ENCODE measurements at regions of chr4 and their contacts with region 1.

Region 1: DNA sequence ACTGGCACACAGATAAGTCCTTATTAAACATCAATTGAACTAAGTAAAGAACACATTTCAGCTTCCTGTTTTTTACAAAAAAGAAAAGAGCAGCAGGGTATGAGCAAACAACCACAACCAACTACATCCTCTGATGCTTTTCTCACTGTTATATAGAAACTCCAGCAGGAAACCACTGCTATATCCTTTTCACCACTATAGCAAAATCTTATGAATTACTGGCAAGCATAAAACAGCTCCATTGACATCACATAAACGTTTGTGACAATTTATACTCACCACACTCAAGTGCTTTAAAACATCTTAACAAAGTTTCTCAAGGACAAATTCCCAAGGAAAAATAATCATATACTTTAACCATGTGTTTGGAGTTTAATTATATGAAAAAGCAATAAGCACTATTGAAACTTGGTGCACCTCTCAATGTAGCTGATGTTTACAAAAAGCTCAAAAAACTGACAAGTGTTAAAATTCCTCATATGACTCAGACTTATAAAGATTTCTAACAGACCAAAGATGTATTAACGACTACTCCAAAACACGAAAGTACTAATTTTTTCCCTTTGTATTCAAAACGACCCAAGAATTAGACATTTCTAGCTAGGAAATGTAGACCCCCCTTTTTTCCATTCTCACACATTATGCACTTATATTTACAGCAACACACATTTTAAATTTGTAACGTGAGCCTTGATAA is 12.9 kb downstream of the GPRIN3 start:
- DNase-seq: peak; percentile 47
- ATAC-seq: peak; percentile 67
- H3K4me3 Mint-ChIP-seq: peak overlapping the region; percentile 60
- H3K27ac Mint-ChIP-seq: peak overlapping the region; percentile 96
- H3K4me1 Mint-ChIP-seq: peaks cover 91% of the 10 kb centered on the region
- H3K27me3 Mint-ChIP-seq: no peaks in the 10 kb centered on the region

Region 2: DNA sequence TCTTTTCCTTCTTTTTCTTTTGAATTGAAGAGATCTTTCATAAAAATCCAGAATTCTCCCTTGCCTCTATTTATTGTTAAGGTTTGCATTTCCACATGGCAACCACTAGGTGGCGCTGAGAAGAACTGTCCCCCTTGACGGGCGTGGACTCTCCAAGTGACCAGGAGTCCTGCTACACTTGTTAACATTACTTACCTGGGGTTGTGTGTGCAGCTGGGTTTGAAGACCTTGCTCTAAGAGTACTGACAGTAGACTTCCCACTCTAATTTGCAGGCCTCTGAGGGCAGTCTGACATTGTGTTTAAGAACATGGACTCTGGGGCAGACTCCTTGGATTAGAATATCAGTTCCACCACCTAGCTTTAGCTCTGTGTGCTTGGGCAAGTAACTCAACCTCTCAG is 39.9 kb before region 1 on chr4:
- CTCF ChIA-PET with region 1: interaction called, 20 read pairs
- POLR2A ChIA-PET with region 1: interaction called, 7 read pairs
- DNase-seq: peak; percentile 53
- ATAC-seq: peak; percentile 57
- H3K4me3 Mint-ChIP-seq: no peak overlapping the region
- H3K27ac Mint-ChIP-seq: peak overlapping the region; percentile 25
- H3K4me1 Mint-ChIP-seq: peaks cover 64% of the 10 kb centered on the region
- H3K27me3 Mint-ChIP-seq: no peaks in the 10 kb centered on the region

Region 3: GRCh38 chr4:89283226-89284009 is 11.3 kb before region 1 on chr4:
- CTCF ChIA-PET with region 1: interaction called, 9 read pairs
- POLR2A ChIA-PET with region 1: interaction called, 28 read pairs
- DNase-seq: peak; percentile 69
- ATAC-seq: peak; percentile 76
- H3K4me3 Mint-ChIP-seq: peak overlapping the region; percentile 50
- H3K27ac Mint-ChIP-seq: peak overlapping the region; percentile 78
- H3K4me1 Mint-ChIP-seq: peaks cover 59% of the 10 kb centered on the region
- H3K27me3 Mint-ChIP-seq: no peaks in the 10 kb centered on the region

Region 4: GRCh38 chr4:89307446-89308160 is 12.9 kb after region 1 on chr4 and contains the start of gene GPRIN3:
- CTCF ChIA-PET with region 1: interaction called, 13 read pairs
- POLR2A ChIA-PET with region 1: interaction called, 41 read pairs
- DNase-seq: peak; percentile 61
- ATAC-seq: peak; percentile 76
- H3K4me3 Mint-ChIP-seq: peak within 1 kb of the TSS; percentile 90
- H3K27ac Mint-ChIP-seq: peak within 1 kb of the TSS; percentile 84
- H3K4me1 Mint-ChIP-seq: peaks cover 52% of the 10 kb centered on the region
- H3K27me3 Mint-ChIP-seq: no peaks in the 10 kb centered on the region
- total RNA-seq, gene GPRIN3: 40.6 to 40.8 TPM

Region 5: GRCh38 chr4:89316931-89317366 is 22.2 kb after region 1 on chr4:
- CTCF ChIA-PET with region 1: interaction called, 12 read pairs
- POLR2A ChIA-PET with region 1: interaction called, 9 read pairs
- DNase-seq: peak; percentile 41
- ATAC-seq: peak; percentile 87
- H3K4me3 Mint-ChIP-seq: peak overlapping the region; percentile 27
- H3K27ac Mint-ChIP-seq: peak overlapping the region; percentile 86
- H3K4me1 Mint-ChIP-seq: peaks cover 37% of the 10 kb centered on the region
- H3K27me3 Mint-ChIP-seq: no peaks in the 10 kb centered on the region

Region 6: DNA sequence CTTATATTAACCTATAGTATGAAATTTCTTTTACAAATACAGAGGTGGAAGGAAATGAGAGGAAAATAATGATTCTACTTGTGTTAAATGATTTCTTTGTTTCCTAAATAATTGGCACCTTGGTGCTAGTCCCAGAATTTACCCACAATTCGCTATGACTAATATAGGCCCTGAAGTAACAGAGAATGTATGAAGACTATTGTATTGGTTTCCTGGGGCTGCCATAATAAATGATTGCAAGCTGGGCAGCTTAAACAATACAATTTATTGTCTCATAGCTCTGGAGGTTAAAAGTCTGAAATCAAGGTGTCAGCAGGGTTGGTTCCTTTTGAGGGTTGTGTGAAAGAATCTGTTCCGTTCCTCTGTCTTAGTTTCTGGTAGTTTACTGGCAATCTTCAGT is 87.7 kb after region 1 on chr4:
- CTCF ChIA-PET with region 1: no interaction called
- POLR2A ChIA-PET with region 1: no interaction called
- DNase-seq: no peak
- ATAC-seq: no peak
- H3K4me3 Mint-ChIP-seq: no peak overlapping the region
- H3K27ac Mint-ChIP-seq: no peak overlapping the region
- H3K4me1 Mint-ChIP-seq: no peaks in the 10 kb centered on the region
- H3K27me3 Mint-ChIP-seq: no peaks in the 10 kb centered on the region

Region 7: GRCh38 chr4:89410687-89411086 is 116.0 kb after region 1 on chr4:
- CTCF ChIA-PET with region 1: no interaction called
- POLR2A ChIA-PET with region 1: no interaction called
- DNase-seq: no peak
- ATAC-seq: no peak
- H3K4me3 Mint-ChIP-seq: no peak overlapping the region
- H3K27ac Mint-ChIP-seq: no peak overlapping the region
- H3K4me1 Mint-ChIP-seq: no peaks in the 10 kb centered on the region
- H3K27me3 Mint-ChIP-seq: peaks cover 1% of the 10 kb centered on the region

Region 8: GRCh38 chr4:89434364-89434988 is 139.8 kb after region 1 on chr4:
- CTCF ChIA-PET with region 1: interaction called, 13 read pairs
- POLR2A ChIA-PET with region 1: no interaction called
- DNase-seq: no peak
- ATAC-seq: peak; percentile 70
- H3K4me3 Mint-ChIP-seq: no peak overlapping the region
- H3K27ac Mint-ChIP-seq: no peak overlapping the region
- H3K4me1 Mint-ChIP-seq: peaks cover 13% of the 10 kb centered on the region
- H3K27me3 Mint-ChIP-seq: peaks cover 2% of the 10 kb centered on the region

Measured in activated CD8-positive, alpha-beta T cell treated with anti-CD3 and anti-CD28 coated beads, Interleukin-2, amount 10 ng/mL, durations not matched to agents 7 days and 5 days (primary cell).